Activated T-helper 2 cell treated with anti-CD3 and anti-CD28 coated beads, Interferon-gamma antibody, Interleukin-2, Interleukin-4, amounts not matched to agents 10 μg/mL and 5 μg/mL and 100 μg/mL, durations not matched to agents 14 hours and 24 hours and 36 hours (primary cell): ENCODE measurements at regions of chr2 and their contacts with region 1.

Region 1: GRCh38 chr2:183124222-183124956 is at the start of gene NUP35:
- DNase-seq: peak; percentile 74
- H3K4me3 Mint-ChIP-seq: peak within 1 kb of the TSS; percentile 94
- H3K27ac Mint-ChIP-seq: peak within 1 kb of the TSS; percentile 98
- H3K4me1 Mint-ChIP-seq: peaks cover 32% of the 10 kb centered on the region
- H3K27me3 Mint-ChIP-seq: peaks cover 4% of the 10 kb centered on the region
- total RNA-seq, gene NUP35: 30.9 and 39.3 TPM in 2 replicates

Region 2: GRCh38 chr2:182715896-182716668 is 408.3 kb before region 1 on chr2 and contains the start of gene DNAJC10:
- intact Hi-C with region 1: loop called (anchors 1 kb)
- DNase-seq: peak; percentile 84
- H3K4me3 Mint-ChIP-seq: no peak within 1 kb of the TSS
- H3K27ac Mint-ChIP-seq: no peak within 1 kb of the TSS
- H3K4me1 Mint-ChIP-seq: peaks cover 5% of the 10 kb centered on the region
- H3K27me3 Mint-ChIP-seq: peaks cover 16% of the 10 kb centered on the region
- total RNA-seq, gene DNAJC10: 63.5 and 64.6 TPM in 2 replicates

Region 3: GRCh38 chr2:183078465-183079138 is 45.8 kb before region 1 on chr2 and contains the start of gene DUSP19:
- intact Hi-C with region 1: loop called (anchors 1 kb)
- DNase-seq: peak; percentile 72
- H3K4me3 Mint-ChIP-seq: peak within 1 kb of the TSS; percentile 83
- H3K27ac Mint-ChIP-seq: peak within 1 kb of the TSS; percentile 21
- H3K4me1 Mint-ChIP-seq: peaks cover 7% of the 10 kb centered on the region
- H3K27me3 Mint-ChIP-seq: peaks cover 7% of the 10 kb centered on the region
- total RNA-seq, gene DUSP19: 1.6 and 1.9 TPM in 2 replicates

Region 4: GRCh38 chr2:183162362-183162761 is 38.0 kb after region 1 on chr2:
- intact Hi-C with region 1: no loop called
- DNase-seq: no peak
- H3K4me3 Mint-ChIP-seq: no peak overlapping the region
- H3K27ac Mint-ChIP-seq: no peak overlapping the region
- H3K4me1 Mint-ChIP-seq: no peaks in the 10 kb centered on the region
- H3K27me3 Mint-ChIP-seq: no peaks in the 10 kb centered on the region

Region 5: DNA sequence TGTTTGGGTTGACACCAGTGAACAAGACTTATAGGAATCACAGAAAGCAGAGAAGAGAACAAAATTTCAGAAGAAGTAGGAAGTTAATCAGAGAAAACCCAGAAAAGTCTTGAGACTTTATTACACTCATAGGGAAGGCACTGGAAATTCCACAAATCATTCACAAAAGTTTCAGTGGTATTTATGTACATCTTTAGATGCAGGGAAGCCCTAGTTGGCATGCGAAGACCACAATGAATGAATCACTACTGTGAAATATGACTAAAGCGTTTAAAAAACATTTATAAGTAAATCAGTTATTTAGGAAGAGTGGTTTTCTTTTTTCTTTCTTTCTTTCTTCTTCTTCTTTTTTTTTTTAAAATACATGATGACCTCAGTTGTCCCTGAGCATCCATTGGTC is 105.0 kb after region 1 on chr2:
- intact Hi-C with region 1: loop called (anchors 1 kb)
- DNase-seq: no peak
- H3K4me3 Mint-ChIP-seq: no peak overlapping the region
- H3K27ac Mint-ChIP-seq: peak overlapping the region; percentile 53
- H3K4me1 Mint-ChIP-seq: peaks cover 5% of the 10 kb centered on the region
- H3K27me3 Mint-ChIP-seq: no peaks in the 10 kb centered on the region